ENCODE measurements at regions of chr7 and their contacts with region 1.

Region 1: GRCh38 chr7:129797214-129797789 is 155.5 kb downstream of the UBE2H start:
- DNase-seq: no peak
- H3K4me3 ChIP-seq: no peak overlapping the region
- CTCF ChIP-seq: no peak

Region 2: DNA sequence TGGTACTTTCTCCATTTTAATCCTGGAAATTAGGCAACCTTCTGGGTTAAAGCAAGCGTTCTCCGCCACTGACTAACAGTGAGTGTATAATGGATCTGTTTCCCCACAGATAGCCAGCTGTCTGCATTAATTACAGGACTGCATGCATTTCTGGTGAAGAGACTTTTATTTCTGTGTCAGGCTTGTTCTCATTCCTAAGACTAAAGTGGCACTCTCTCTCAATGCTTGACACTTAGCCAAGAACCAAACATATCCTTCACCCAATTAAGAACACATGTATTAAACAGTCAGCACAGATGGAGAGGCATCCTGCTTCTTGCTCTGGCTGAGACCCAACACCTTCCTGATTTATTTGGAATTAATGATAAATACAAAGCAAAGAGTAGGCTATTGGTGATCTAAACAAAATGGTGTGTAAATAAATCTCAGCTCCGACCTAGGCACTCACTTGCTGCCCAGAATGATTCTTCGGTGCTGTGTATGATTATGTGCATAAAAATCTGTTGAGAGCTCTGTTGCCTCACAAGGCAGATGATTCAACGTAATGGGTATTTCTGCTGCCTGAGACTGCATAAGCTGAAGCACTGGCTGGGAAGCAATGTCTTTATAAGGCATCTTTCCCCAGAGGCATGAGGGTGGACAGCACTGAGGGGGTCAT is 1041.4 kb before region 1 on chr7:
- in situ Hi-C with region 1: no loop called
- DNase-seq: peak; percentile 20
- H3K4me3 ChIP-seq: no peak overlapping the region
- CTCF ChIP-seq: no peak

Region 3: GRCh38 chr7:129689995-129690581 is 107.2 kb before region 1 on chr7:
- in situ Hi-C with region 1: loop called (anchors 5 kb)
- DNase-seq: no peak
- H3K4me3 ChIP-seq: no peak overlapping the region
- CTCF ChIP-seq: no peak

Region 4: DNA sequence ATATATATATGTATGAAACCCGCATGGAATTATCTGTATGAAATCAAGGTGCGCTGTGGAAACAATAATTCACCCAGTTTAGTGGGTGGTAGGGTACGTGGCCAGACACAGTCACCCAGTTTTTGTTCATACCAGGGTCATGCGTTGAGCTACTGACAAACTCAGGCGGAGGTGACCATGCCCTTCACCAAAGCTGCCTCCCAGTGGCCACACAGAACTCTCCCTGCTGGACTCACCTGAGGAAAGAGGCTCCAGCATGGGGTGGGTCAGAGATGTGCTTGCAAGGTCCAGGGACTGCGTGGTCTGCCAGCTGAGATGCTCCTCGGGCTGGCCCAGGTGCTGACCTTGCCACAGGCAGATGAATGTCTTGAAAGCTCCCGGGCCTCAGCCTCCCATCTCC is 41.7 kb before region 1 on chr7:
- in situ Hi-C with region 1: loop called (anchors 5 kb)
- DNase-seq: no peak
- H3K4me3 ChIP-seq: no peak overlapping the region
- CTCF ChIP-seq: no peak

Region 5: GRCh38 chr7:129864042-129864441 is 66.7 kb after region 1 on chr7:
- in situ Hi-C with region 1: no loop called
- DNase-seq: no peak
- H3K4me3 ChIP-seq: no peak overlapping the region
- CTCF ChIP-seq: no peak

Measured in astrocyte of the cerebellum (primary cell).